ENCODE measurements at regions of chr16 and their contacts with region 1.

Region 1: GRCh38 chr16:27235055-27235937 is 32.0 kb downstream of the KDM8 start:
- DNase-seq: peak; percentile 84
- H3K4me3 Mint-ChIP-seq: no peak overlapping the region
- H3K27ac Mint-ChIP-seq: no peak overlapping the region
- H3K4me1 Mint-ChIP-seq: peaks cover 23% of the 10 kb centered on the region
- H3K27me3 Mint-ChIP-seq: no peaks in the 10 kb centered on the region
- CTCF ChIP-seq: peak; percentile 77

Region 2: GRCh38 chr16:27113341-27113841 is 121.9 kb before region 1 on chr16:
- CTCF ChIA-PET with region 1: no interaction called
- POLR2A ChIA-PET with region 1: no interaction called
- intact Hi-C with region 1: no loop called
- DNase-seq: no peak
- H3K4me3 Mint-ChIP-seq: no peak overlapping the region
- H3K27ac Mint-ChIP-seq: no peak overlapping the region
- H3K4me1 Mint-ChIP-seq: no peaks in the 10 kb centered on the region
- H3K27me3 Mint-ChIP-seq: peaks cover 49% of the 10 kb centered on the region
- CTCF ChIP-seq: no peak

Region 3: GRCh38 chr16:27203429-27204231 is 31.7 kb before region 1 on chr16 and contains the start of gene KDM8:
- CTCF ChIA-PET with region 1: interaction called, 14 read pairs
- POLR2A ChIA-PET with region 1: interaction called, 9 read pairs
- intact Hi-C with region 1: no loop called
- DNase-seq: peak; percentile 99
- H3K4me3 Mint-ChIP-seq: peak within 1 kb of the TSS; percentile 95
- H3K27ac Mint-ChIP-seq: peak within 1 kb of the TSS; percentile 100
- H3K4me1 Mint-ChIP-seq: peaks cover 10% of the 10 kb centered on the region
- H3K27me3 Mint-ChIP-seq: no peaks in the 10 kb centered on the region
- CTCF ChIP-seq: no peak
- total RNA-seq, gene KDM8: 3.7 and 4.1 TPM in 2 replicates

Region 4: DNA sequence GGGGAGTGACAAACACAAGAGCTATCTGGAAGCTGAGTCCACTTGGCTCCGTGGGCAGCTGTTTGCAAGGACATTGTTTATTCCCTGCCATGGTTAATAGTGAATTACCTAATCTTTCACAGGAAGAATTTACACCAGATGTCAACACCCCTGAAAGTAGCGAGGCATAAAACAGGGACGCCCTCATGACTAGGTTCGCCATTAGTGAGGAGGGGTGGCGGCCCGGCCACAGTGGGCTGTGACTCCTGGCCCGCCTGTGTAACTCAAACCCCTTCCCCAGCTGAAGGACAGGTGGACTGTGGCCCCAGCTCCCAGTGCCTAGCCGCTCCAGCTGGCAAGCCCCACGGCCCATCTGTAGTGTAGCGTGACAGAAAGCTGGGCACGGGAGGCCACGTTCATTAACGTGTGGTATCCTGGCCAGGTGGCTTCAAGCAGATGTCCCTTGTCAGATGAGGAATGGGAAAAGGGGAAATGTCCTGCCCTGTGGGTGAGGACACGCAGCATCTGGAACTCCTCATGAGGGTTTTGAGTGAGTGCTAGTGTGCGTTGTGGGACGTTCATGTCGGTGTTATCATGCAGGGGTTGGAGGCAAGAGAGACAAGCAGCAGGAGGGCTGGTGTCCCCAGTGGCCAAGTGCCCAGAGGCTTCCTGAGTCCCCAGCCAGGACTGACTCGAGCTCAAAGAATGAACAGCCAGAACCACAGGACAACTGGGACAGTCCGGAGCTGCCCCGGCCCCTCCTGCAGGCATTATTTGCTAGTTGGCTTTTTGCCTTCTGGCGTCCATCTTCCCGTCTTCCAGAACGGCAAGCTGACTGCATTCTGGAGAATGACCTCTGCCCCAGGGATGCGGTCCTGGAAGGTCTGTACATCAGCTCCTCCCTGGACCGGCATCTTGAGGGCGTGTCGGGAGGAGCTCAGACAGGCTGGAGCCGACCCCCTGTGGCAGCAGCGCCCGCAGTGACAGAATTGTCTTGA is 12.8 kb before region 1 on chr16:
- CTCF ChIA-PET with region 1: interaction called, 58 read pairs
- POLR2A ChIA-PET with region 1: interaction called, 3 read pairs
- intact Hi-C with region 1: no loop called
- DNase-seq: no peak
- H3K4me3 Mint-ChIP-seq: no peak overlapping the region
- H3K27ac Mint-ChIP-seq: no peak overlapping the region
- H3K4me1 Mint-ChIP-seq: no peaks in the 10 kb centered on the region
- H3K27me3 Mint-ChIP-seq: no peaks in the 10 kb centered on the region
- CTCF ChIP-seq: no peak

Region 5: DNA sequence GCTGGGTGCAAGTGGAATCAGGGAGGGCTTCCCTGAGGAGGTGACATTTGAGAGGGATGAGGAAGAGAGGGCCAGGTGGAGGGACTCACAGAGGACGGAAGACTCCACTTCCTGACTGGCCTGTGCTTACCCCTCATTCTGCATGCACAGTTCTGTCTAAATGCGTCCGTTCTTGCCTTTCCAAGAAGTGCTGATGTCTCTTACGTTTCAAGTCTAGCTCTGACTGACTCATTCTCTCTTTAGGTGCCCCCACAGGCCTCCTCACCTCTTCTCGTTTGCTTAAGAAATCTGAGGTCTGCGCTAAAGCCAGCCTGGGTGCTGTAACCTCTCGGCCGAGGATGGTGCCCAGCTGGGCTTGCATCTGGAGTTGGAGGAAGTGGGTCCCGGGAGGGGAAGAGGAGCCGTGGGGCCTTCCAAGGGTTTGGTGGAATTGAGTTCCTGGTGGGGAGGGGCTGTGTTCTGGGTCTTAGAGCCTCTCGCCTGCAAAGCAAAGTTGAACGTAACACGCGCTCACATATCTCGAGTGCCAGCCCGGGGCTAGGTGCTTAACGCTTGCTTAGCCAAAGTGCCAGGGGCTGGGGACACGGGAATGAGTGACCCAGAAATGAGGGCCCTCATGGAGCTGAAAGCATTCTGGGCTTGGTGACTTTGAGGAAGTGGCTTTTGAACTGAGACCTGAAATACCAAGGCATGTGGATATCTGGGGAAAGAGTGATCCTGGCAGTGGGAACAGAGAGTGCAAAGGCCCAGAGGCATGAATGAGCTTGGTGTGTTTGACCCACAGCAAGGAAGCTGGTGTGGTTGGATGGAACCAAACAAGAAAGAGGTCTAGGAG is 83.3 kb after region 1 on chr16:
- CTCF ChIA-PET with region 1: interaction called, 18 read pairs
- POLR2A ChIA-PET with region 1: interaction called, 4 read pairs
- intact Hi-C with region 1: no loop called
- DNase-seq: peak; percentile 90
- H3K4me3 Mint-ChIP-seq: peak overlapping the region; percentile 67
- H3K27ac Mint-ChIP-seq: peak overlapping the region; percentile 61
- H3K4me1 Mint-ChIP-seq: peaks cover 66% of the 10 kb centered on the region
- H3K27me3 Mint-ChIP-seq: no peaks in the 10 kb centered on the region
- CTCF ChIP-seq: no peak

Region 6: DNA sequence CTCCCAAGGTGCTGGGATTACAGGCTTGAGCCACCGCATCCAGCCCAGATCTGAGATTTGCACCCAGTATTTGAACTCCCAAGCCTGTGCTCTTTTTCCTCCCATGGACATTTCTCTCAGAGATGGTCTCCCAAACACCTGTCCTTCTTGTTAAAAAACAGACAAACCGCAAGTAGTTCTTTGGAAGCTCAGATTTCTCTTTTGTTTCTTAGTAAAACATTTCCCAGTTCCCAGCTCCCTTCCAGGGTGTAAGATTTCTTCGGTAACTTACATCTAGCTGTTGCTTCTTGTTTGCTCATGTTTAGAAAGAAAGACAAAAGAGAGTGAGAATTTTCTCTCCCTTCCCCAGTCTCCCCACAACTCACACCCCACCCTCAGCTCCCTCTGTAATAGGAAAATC is 114.7 kb after region 1 on chr16:
- CTCF ChIA-PET with region 1: interaction called, 20 read pairs
- POLR2A ChIA-PET with region 1: no interaction called
- intact Hi-C with region 1: no loop called
- DNase-seq: no peak
- H3K4me3 Mint-ChIP-seq: no peak overlapping the region
- H3K27ac Mint-ChIP-seq: no peak overlapping the region
- H3K4me1 Mint-ChIP-seq: no peaks in the 10 kb centered on the region
- H3K27me3 Mint-ChIP-seq: no peaks in the 10 kb centered on the region
- CTCF ChIP-seq: no peak

Region 7: GRCh38 chr16:27367461-27368357 is 132.4 kb after region 1 on chr16:
- CTCF ChIA-PET with region 1: interaction called, 248 read pairs
- POLR2A ChIA-PET with region 1: interaction called, 8 read pairs
- intact Hi-C with region 1: loop called (anchors 1 kb)
- DNase-seq: peak; percentile 78
- H3K4me3 Mint-ChIP-seq: peak overlapping the region; percentile 39
- H3K27ac Mint-ChIP-seq: no peak overlapping the region
- H3K4me1 Mint-ChIP-seq: peaks cover 6% of the 10 kb centered on the region
- H3K27me3 Mint-ChIP-seq: no peaks in the 10 kb centered on the region
- CTCF ChIP-seq: peak; percentile 91

Region 8: GRCh38 chr16:27446721-27447120 is 211.4 kb after region 1 on chr16:
- CTCF ChIA-PET with region 1: interaction called, 11 read pairs
- POLR2A ChIA-PET with region 1: no interaction called
- intact Hi-C with region 1: no loop called
- DNase-seq: no peak
- H3K4me3 Mint-ChIP-seq: no peak overlapping the region
- H3K27ac Mint-ChIP-seq: no peak overlapping the region
- H3K4me1 Mint-ChIP-seq: peaks cover 5% of the 10 kb centered on the region
- H3K27me3 Mint-ChIP-seq: no peaks in the 10 kb centered on the region
- CTCF ChIP-seq: no peak

Measured in MCF 10A (cell line).